Activated T-helper 2 cell treated with anti-CD3 and anti-CD28 coated beads, Interferon-gamma antibody, Interleukin-2, Interleukin-4, amounts not matched to agents 10 μg/mL and 5 μg/mL and 100 μg/mL, durations not matched to agents 14 hours and 24 hours and 36 hours (primary cell): ENCODE measurements at regions of chr15 and their contacts with region 1.

Region 1: GRCh38 chr15:73979636-73980035 is 12.5 kb downstream of the STOML1 start:
- DNase-seq: no peak
- H3K4me3 Mint-ChIP-seq: no peak overlapping the region
- H3K27ac Mint-ChIP-seq: no peak overlapping the region
- H3K4me1 Mint-ChIP-seq: peaks cover 37% of the 10 kb centered on the region
- H3K27me3 Mint-ChIP-seq: peaks cover 6% of the 10 kb centered on the region

Region 2: GRCh38 chr15:73196113-73196512 is 783.5 kb before region 1 on chr15:
- intact Hi-C with region 1: no loop called
- DNase-seq: no peak
- H3K4me3 Mint-ChIP-seq: no peak overlapping the region
- H3K27ac Mint-ChIP-seq: no peak overlapping the region
- H3K4me1 Mint-ChIP-seq: no peaks in the 10 kb centered on the region
- H3K27me3 Mint-ChIP-seq: no peaks in the 10 kb centered on the region

Region 3: DNA sequence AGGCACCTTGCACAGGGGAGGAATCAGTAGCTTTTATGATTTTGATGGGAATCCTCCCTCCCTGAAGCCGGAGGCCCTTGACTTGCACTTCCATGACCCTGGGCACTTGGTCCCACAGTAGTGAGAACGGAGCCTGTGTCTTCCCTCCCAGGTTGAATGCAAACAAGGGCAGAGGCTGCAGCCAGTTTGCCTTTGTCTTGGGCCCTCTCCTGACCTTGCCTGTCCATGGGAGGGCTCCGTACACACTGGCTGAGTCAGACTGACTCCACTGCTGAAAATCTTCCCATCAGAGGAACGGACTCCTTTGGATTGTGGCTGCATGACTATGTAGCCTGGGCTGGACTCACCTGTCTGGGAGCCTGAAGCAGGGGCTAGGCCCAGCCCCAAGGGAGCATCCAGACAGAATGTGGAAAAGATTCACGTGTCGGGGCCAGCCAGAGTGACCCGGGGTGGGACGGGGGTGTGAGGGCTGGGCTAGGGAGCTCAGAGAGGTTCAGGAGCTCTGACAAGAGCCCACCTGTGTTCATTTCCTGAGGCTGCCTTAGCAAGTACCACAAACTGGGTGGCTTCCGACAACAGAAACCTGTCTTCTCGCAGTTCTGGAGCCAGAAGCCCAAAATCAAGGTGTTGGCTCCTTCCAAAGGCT is 96.7 kb before region 1 on chr15:
- intact Hi-C with region 1: no loop called
- DNase-seq: no peak
- H3K4me3 Mint-ChIP-seq: no peak overlapping the region
- H3K27ac Mint-ChIP-seq: no peak overlapping the region
- H3K4me1 Mint-ChIP-seq: no peaks in the 10 kb centered on the region
- H3K27me3 Mint-ChIP-seq: peaks cover 12% of the 10 kb centered on the region

Region 4: GRCh38 chr15:73956739-73957051 is 22.9 kb before region 1 on chr15:
- intact Hi-C with region 1: no loop called
- DNase-seq: no peak
- H3K4me3 Mint-ChIP-seq: no peak overlapping the region
- H3K27ac Mint-ChIP-seq: no peak overlapping the region
- H3K4me1 Mint-ChIP-seq: peaks cover 28% of the 10 kb centered on the region
- H3K27me3 Mint-ChIP-seq: no peaks in the 10 kb centered on the region

Region 5: DNA sequence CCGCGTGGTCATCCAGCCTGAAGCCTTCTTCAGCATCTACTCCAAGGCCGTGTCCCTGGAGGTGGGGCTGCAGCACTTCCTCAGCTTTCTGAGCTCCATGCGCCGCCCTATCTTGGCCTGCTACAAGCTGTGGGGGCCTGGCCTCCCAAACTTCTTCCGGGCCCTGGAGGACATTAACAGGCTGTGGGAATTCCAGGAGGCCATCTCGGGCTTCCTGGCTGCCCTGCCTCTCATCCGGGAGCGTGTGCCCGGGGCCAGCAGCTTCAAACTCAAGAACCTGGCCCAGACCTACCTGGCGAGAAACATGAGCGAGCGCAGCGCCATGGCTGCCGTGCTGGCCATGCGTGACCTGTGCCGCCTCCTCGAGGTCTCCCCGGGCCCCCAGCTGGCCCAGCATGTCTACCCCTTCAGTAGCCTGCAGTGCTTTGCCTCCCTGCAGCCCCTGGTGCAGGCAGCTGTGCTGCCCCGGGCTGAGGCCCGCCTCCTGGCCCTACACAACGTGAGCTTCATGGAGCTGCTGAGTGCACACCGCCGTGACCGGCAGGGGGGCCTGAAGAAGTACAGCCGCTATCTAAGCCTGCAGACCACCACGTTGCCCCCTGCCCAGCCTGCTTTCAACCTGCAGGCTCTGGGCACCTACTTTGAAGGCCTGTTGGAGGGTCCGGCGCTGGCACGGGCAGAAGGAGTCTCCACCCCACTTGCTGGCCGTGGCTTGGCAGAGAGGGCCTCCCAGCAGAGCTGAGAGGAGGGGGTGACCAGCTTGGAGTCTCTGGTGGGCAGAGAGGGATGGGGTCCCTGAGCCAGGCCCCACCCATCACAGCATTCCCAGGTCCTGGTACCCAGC is 64.9 kb after region 1 on chr15:
- intact Hi-C with region 1: loop called (anchors 5 kb)
- DNase-seq: no peak
- H3K4me3 Mint-ChIP-seq: no peak overlapping the region
- H3K27ac Mint-ChIP-seq: no peak overlapping the region
- H3K4me1 Mint-ChIP-seq: peaks cover 8% of the 10 kb centered on the region
- H3K27me3 Mint-ChIP-seq: no peaks in the 10 kb centered on the region